Colonic mucosa (tissue), 4 donors: ENCODE measurements at regions of chr7 and their contacts with region 1.

Region 1: GRCh38 chr7:104848138-104848990 is 165.6 kb upstream of the KMT2E start:
- DNase-seq: peak; percentile 64
- H3K4me3 ChIP-seq: no peak overlapping the region
- H3K27ac ChIP-seq: no peak overlapping the region
- H3K4me1 ChIP-seq: no peaks in the 10 kb centered on the region
- H3K27me3 ChIP-seq: no peaks in the 10 kb centered on the region
- CTCF ChIP-seq: peak; percentile 77

Region 2: GRCh38 chr7:104231054-104232046 is 617.0 kb before region 1 on chr7:
- intact Hi-C with region 1: loop called (anchors 5 kb)
- DNase-seq: peak; percentile 30
- H3K4me3 ChIP-seq: no peak overlapping the region
- H3K27ac ChIP-seq: no peak overlapping the region
- H3K4me1 ChIP-seq: no peaks in the 10 kb centered on the region
- H3K27me3 ChIP-seq: no peaks in the 10 kb centered on the region
- CTCF ChIP-seq: peak; percentile 73

Region 3: GRCh38 chr7:105024743-105025142 is 176.4 kb after region 1 on chr7:
- intact Hi-C with region 1: no loop called
- DNase-seq: no peak
- H3K4me3 ChIP-seq: no peak overlapping the region
- H3K27ac ChIP-seq: no peak overlapping the region
- H3K4me1 ChIP-seq: peaks cover 7% of the 10 kb centered on the region
- H3K27me3 ChIP-seq: no peaks in the 10 kb centered on the region
- CTCF ChIP-seq: no peak